ENCODE measurements at regions of chr9 and their contacts with region 1.

Region 1: DNA sequence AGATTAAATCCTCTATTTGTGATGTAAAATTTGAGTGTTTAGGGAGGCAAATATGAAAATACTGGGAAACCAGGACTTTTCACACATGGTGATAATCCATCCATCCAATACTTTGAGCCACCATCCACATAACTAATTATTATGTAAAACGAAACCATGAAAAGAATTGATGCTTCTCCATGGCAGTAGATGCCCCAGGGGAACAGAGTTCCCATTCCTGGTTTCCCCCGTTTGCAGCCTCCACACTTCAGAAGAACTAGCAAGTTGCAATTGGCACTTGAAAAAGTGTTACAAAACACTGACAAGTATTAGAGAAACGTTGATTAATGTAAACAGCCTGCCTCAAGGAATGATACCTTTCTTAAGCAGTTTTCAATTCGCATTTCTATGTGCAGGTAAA is 9.7 kb upstream of the TLE1 start:
- DNase-seq: no peak
- H3K4me3 ChIP-seq: no peak overlapping the region
- H3K4me3 Mint-ChIP-seq: no peak overlapping the region
- H3K27ac ChIP-seq: no peak overlapping the region
- H3K27ac Mint-ChIP-seq: no peak overlapping the region
- H3K4me1 ChIP-seq: no peaks in the 10 kb centered on the region
- H3K4me1 Mint-ChIP-seq: peaks cover 4% of the 10 kb centered on the region
- H3K27me3 ChIP-seq: peaks cover 0 to 3% of the 10 kb centered on the region in 2 donors
- H3K27me3 Mint-ChIP-seq: peaks cover 3 to 10% (median 6%) of the 10 kb centered on the region in 3 donors
- CTCF ChIP-seq: no peak

Region 2: GRCh38 chr9:81529556-81530195 is 169.4 kb before region 1 on chr9:
- intact Hi-C with region 1: no loop called
- DNase-seq: peak in 1 of 3 donors; percentile 4
- H3K4me3 ChIP-seq: no peak overlapping the region
- H3K4me3 Mint-ChIP-seq: no peak overlapping the region
- H3K27ac ChIP-seq: no peak overlapping the region
- H3K27ac Mint-ChIP-seq: no peak overlapping the region
- H3K4me1 ChIP-seq: no peaks in the 10 kb centered on the region
- H3K4me1 Mint-ChIP-seq: peaks cover 7% of the 10 kb centered on the region
- H3K27me3 ChIP-seq: no peaks in the 10 kb centered on the region
- H3K27me3 Mint-ChIP-seq: peaks cover 0 to 5% (median 2%) of the 10 kb centered on the region in 3 donors
- CTCF ChIP-seq: no peak

Region 3: GRCh38 chr9:81653240-81653639 is 45.8 kb before region 1 on chr9:
- intact Hi-C with region 1: loop called in 1 of 2 experiments (anchors 5 kb)
- DNase-seq: no peak
- H3K4me3 ChIP-seq: no peak overlapping the region
- H3K4me3 Mint-ChIP-seq: no peak overlapping the region
- H3K27ac ChIP-seq: no peak overlapping the region
- H3K27ac Mint-ChIP-seq: no peak overlapping the region
- H3K4me1 ChIP-seq: peaks cover 12 to 15% of the 10 kb centered on the region in 2 donors
- H3K4me1 Mint-ChIP-seq: peaks cover 19% of the 10 kb centered on the region
- H3K27me3 ChIP-seq: no peaks in the 10 kb centered on the region
- H3K27me3 Mint-ChIP-seq: no peaks in the 10 kb centered on the region
- CTCF ChIP-seq: no peak

Region 4: DNA sequence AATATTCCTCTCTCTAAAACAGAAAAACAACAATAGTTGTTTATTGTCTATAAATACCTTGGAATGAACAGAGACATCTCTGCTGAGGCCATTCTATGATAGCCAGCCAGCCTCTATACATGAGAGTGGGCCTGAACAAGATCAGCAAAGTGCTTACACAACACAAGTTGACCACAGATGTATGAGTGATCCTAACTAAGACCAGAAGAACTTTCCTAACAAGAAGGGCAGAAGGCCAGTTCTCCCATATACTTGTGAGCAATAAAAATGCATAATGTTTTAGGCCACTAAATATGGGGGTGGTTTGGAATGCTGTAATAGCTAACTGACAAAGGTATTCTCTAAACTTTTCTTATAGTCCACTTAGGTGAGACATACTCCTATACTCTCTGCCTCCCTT is 635.2 kb after region 1 on chr9:
- intact Hi-C with region 1: no loop called
- DNase-seq: no peak
- H3K4me3 ChIP-seq: no peak overlapping the region
- H3K4me3 Mint-ChIP-seq: no peak overlapping the region
- H3K27ac ChIP-seq: no peak overlapping the region
- H3K27ac Mint-ChIP-seq: no peak overlapping the region
- H3K4me1 ChIP-seq: no peaks in the 10 kb centered on the region
- H3K4me1 Mint-ChIP-seq: peaks cover 2% of the 10 kb centered on the region
- H3K27me3 ChIP-seq: no peaks in the 10 kb centered on the region
- H3K27me3 Mint-ChIP-seq: no peaks in the 10 kb centered on the region
- CTCF ChIP-seq: no peak

Region 5: DNA sequence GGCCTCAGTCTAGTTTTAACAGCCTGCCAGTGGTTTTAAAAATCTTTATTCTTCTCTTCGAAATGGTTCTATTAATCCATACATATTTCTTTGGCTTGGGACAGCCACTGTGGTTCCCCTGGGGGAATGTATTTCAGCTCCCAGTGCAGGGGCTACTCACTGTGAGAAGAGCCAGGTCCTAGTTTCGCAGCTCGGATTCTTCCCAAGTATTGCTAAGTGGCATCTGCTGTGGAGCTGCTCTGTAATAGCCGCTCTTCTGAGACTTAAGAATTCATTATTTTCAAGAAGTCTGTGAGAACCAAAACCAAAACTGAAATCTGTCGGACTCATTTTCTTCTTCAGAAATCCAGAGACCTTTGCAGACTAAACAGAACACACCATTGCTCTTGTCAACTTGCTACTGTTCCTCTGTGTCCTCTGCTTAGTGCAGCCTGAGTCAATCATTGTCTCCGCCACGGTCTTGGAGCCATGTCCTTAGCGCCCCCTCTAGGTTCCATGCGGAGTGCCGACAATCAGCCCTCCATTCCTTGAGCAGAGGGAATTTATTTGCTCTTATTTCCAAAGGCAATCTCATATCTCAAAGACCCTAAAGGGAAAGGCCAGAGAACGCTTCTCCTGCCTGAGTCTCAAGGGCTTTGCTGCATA is 767.7 kb after region 1 on chr9:
- intact Hi-C with region 1: no loop called
- DNase-seq: no peak
- H3K4me3 ChIP-seq: no peak overlapping the region
- H3K4me3 Mint-ChIP-seq: no peak overlapping the region
- H3K27ac ChIP-seq: no peak overlapping the region
- H3K27ac Mint-ChIP-seq: no peak overlapping the region
- H3K4me1 ChIP-seq: no peaks in the 10 kb centered on the region
- H3K4me1 Mint-ChIP-seq: no peaks in the 10 kb centered on the region
- H3K27me3 ChIP-seq: no peaks in the 10 kb centered on the region
- H3K27me3 Mint-ChIP-seq: peaks cover 0 to 2% (median 0%) of the 10 kb centered on the region in 3 donors
- CTCF ChIP-seq: no peak

Measured in CD14-positive monocyte (primary cell).